Right lobe of liver (tissue), 6 donors: ENCODE measurements at regions of chr2 and their contacts with region 1.

Region 1: GRCh38 chr2:132547074-132547687 is 122.8 kb downstream of the LYPD1 start:
- DNase-seq: peak in 2 of 3 donors; percentile 54 to 73
- ATAC-seq: peak; percentile 71 to 89 (median 86)
- H3K4me3 ChIP-seq: no peak overlapping the region
- H3K27ac ChIP-seq: no peak overlapping the region
- H3K4me1 ChIP-seq: no peaks in the 10 kb centered on the region
- H3K27me3 ChIP-seq: no peaks in the 10 kb centered on the region
- CTCF ChIP-seq: peak; percentile 65 to 78 (median 69)
- POLR2A ChIP-seq: no peak

Region 2: GRCh38 chr2:132632000-132632649 is 84.9 kb after region 1 on chr2:
- intact Hi-C with region 1: loop called in 1 of 2 experiments (anchors 10 kb)
- DNase-seq: peak; percentile 75 to 89 (median 83)
- ATAC-seq: peak; percentile 95 to 98 (median 96)
- H3K4me3 ChIP-seq: peak overlapping the region in 1 of 3 donors; percentile 14
- H3K27ac ChIP-seq: peak overlapping the region; percentile 64 to 79 (median 68)
- H3K4me1 ChIP-seq: peaks cover 0 to 20% (median 10%) of the 10 kb centered on the region in 4 donors
- H3K27me3 ChIP-seq: no peaks in the 10 kb centered on the region
- CTCF ChIP-seq: no peak
- POLR2A ChIP-seq: no peak

Region 3: GRCh38 chr2:132651115-132652045 is 104.2 kb after region 1 on chr2:
- intact Hi-C with region 1: no loop called
- DNase-seq: no peak
- ATAC-seq: peak in 3 of 4 donors; percentile 77 to 81 (median 77)
- H3K4me3 ChIP-seq: no peak overlapping the region
- H3K27ac ChIP-seq: no peak overlapping the region
- H3K4me1 ChIP-seq: no peaks in the 10 kb centered on the region
- H3K27me3 ChIP-seq: no peaks in the 10 kb centered on the region
- CTCF ChIP-seq: peak in 3 of 4 donors; percentile 38 to 43 (median 42)
- POLR2A ChIP-seq: no peak

Region 4: DNA sequence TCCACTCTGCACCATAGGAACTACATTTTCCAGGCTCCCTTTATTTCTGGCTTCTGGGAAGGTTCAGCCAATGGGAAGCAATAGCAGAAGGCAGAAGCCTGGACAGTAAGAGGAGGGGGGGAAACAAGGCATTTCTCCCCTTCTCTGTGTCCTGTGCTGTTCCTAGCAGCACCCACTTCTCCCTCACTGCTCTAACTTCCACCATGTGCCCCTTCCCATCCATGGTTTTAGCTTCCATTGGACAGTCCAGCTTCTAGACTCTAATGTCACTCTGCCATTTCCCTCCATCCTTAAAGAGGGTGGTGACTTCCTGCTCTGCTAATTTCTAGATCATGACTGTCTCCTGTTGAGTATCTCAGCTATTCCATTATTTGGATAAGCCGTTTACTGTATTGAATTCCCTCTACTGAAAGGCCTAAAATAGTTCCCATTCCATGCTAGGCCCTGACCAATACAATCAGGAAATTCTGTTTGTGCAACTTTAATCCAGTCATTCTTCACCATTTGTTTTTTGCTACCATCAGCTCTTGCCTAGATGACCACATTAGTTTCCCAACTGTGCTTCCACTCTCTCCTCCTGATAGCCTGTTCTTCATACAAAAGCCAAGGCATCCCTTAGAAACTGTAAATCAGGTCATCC is 143.6 kb after region 1 on chr2:
- intact Hi-C with region 1: no loop called
- DNase-seq: no peak
- ATAC-seq: no peak
- H3K4me3 ChIP-seq: no peak overlapping the region
- H3K27ac ChIP-seq: no peak overlapping the region
- H3K4me1 ChIP-seq: no peaks in the 10 kb centered on the region
- H3K27me3 ChIP-seq: no peaks in the 10 kb centered on the region
- CTCF ChIP-seq: no peak
- POLR2A ChIP-seq: no peak

Region 5: DNA sequence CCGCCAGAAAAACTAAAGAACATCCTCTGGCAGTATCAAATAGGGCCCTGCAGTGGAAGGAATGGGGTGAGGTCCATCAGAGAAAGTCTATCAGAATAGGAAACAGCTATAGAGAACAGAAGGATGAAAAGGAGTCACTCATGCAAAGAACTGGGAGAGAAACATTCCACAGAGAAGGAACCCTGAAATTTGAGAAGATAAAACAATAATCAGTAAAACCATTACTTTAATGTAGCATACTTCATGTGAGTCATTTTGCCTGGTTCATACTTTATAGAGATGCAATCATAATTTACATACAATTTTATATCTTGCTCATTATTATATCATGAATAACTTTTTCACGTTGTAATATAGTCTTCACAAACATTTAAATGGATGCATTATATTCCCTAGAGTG is 618.9 kb after region 1 on chr2:
- intact Hi-C with region 1: loop called in 1 of 2 experiments (anchors 5 kb)
- DNase-seq: no peak
- ATAC-seq: no peak
- H3K4me3 ChIP-seq: no peak overlapping the region
- H3K27ac ChIP-seq: no peak overlapping the region
- H3K4me1 ChIP-seq: no peaks in the 10 kb centered on the region
- H3K27me3 ChIP-seq: no peaks in the 10 kb centered on the region
- CTCF ChIP-seq: no peak
- POLR2A ChIP-seq: no peak